GM10248 (cell line): ENCODE measurements at regions of chr1 and their contacts with region 1.

Region 1: DNA sequence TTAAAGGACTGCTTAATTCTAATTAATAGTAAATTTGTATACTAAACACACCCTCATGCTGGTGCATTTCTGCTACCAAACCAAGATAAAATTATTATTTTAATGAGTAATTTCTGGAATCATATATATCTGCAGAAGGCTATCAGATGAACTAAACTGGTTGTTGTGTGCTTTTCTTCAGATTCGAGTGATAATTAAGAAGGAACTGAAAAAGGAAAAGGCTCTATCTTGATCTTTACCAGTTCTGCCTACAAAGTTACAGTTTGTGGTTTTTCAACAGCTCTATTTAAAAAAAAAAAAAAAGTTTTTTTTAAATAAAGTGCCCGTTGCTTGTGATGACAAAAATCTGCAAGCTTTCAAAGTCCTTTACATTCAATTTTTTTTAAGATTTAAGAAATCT is 13.7 kb downstream of the DENND1B start:
- DNase-seq: peak; percentile 38
- CTCF ChIP-seq: no peak

Region 2: DNA sequence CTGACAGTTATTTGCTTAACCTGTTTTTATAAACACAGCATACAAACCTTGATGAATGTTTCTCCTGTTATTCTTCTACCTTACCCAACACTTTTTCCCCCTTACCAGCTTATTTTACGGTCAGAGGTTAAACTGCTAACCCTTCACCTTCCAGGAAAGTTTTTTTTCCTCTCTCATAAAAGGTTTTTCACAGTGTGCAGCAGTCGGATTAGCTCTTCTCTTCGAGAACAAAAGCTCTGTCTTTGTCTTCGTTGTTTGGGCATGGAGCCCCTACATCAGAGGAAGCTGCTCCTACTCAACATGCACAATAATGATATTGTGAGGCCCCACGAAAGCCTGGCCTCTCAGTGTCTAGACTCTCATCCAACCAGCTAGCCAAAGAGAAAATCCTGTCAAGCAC is 28.3 kb before region 1 on chr1:
- CTCF ChIA-PET with region 1: no interaction called
- POLR2A ChIA-PET with region 1: no interaction called
- DNase-seq: no peak
- CTCF ChIP-seq: no peak

Region 3: GRCh38 chr1:197744979-197745378 is 16.6 kb before region 1 on chr1:
- CTCF ChIA-PET with region 1: no interaction called
- POLR2A ChIA-PET with region 1: no interaction called
- DNase-seq: no peak
- CTCF ChIP-seq: no peak

Region 4: DNA sequence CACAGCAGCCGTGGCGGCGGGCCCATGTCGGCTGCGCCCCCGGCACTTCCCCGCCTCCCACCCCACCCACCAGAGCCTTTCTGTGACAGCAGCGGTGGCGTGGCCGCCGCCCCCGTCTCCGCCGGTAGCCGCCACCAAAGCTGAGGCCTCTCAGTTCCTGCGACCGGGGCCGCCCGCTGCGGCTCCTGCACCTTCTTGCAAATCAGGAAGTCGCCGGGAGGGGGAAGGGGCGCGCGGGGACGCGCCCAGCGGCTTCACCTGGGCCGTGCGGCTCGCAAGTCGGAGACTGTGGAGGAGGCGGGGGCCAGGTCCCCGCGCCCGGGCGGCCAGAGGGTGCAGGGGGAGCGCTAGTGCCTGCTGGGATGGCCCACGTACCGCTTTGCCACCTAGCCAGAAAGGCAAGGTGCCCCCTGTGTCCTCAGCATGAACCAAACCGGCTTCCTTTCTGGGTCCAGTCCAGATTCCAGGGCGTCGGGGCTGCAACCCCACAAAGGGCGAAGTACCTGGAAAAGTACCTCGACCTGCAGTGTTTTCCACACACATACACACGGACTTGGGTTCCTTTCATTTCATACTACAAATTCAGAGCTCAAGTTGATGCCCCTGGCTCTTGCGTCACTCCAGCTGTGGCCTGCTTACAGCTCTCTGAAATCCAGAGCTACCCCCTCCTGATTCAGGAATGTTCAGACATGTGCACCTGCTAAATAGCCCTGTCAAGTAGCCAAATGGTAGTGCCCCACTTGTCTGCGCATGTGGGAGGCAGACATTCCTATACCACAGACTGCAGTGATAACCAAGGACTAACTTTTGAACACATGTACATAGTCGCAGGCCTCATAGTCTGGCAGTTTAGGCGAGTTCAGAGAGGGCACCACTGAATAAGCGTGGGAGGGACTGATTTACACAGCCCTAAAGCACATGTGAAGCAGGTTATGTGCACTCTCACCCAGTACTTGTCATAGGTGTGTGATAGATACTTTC is 14.0 kb after region 1 on chr1 and contains the start of gene DENND1B:
- CTCF ChIA-PET with region 1: interaction called, 14 read pairs
- POLR2A ChIA-PET with region 1: no interaction called
- DNase-seq: peak; percentile 79
- CTCF ChIP-seq: no peak

Region 5: DNA sequence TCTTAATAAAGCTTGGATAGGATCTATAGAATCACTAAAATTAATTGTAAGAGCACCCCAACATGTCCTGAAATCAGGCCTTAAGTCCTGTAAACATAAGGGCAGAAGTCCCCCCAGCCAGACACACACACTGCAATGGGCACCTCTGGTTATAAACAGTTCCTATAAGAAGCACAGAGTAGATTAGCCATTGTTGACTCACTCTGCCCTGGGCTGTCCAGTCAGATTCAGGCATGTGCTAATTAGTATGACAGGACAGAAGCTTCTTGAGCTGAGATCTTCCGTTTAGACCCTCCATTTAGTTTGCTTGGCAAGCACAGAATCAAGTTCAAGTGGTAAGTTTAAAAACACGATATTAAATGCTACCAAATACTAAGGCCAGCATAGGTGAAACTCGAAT is 25.4 kb after region 1 on chr1:
- CTCF ChIA-PET with region 1: no interaction called
- POLR2A ChIA-PET with region 1: no interaction called
- DNase-seq: no peak
- CTCF ChIP-seq: no peak